Activated CD8-positive, alpha-beta T cell treated with anti-CD3 and anti-CD28 coated beads for 36 hours (primary cell): ENCODE measurements at regions of chr17 and their contacts with region 1.

Region 1: GRCh38 chr17:40536295-40537171 is 28.7 kb downstream of the CCR7 start:
- DNase-seq: peak; percentile 17
- ATAC-seq: no peak
- H3K4me3 Mint-ChIP-seq: no peak overlapping the region
- H3K27ac Mint-ChIP-seq: peak overlapping the region; percentile 50
- H3K4me1 Mint-ChIP-seq: peaks cover 93% of the 10 kb centered on the region
- H3K27me3 Mint-ChIP-seq: no peaks in the 10 kb centered on the region
- CTCF ChIP-seq: no peak

Region 2: GRCh38 chr17:40362696-40363110 is 173.8 kb before region 1 on chr17:
- CTCF ChIA-PET with region 1: interaction called, 168 read pairs
- POLR2A ChIA-PET with region 1: interaction called, 6 read pairs
- intact Hi-C with region 1: loop called (anchors 5 kb)
- DNase-seq: peak; percentile 93
- ATAC-seq: peak; percentile 90
- H3K4me3 Mint-ChIP-seq: peak overlapping the region; percentile 72
- H3K27ac Mint-ChIP-seq: no peak overlapping the region
- H3K4me1 Mint-ChIP-seq: peaks cover 6% of the 10 kb centered on the region
- H3K27me3 Mint-ChIP-seq: peaks cover 4% of the 10 kb centered on the region
- CTCF ChIP-seq: peak; percentile 88

Region 3: DNA sequence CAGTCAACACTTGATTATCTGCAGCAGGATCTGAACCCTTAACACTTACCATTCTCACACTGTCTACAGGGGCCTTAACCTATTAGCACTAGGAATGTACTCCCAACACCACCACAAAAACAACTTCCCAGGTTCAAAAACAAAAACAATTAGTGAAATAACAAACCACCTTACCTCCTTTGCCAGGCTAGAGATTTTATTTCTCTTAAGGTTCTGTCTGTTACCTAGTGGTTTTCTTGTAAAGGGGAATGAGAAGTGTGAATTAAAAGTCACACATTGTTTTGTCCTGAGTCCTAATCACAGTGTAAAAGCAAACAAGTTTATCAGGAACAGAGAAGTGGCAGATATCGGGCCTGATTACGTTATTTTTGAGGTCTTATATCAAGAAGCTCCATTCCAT is 101.4 kb after region 1 on chr17:
- CTCF ChIA-PET with region 1: no interaction called
- POLR2A ChIA-PET with region 1: no interaction called
- intact Hi-C with region 1: no loop called
- DNase-seq: no peak
- ATAC-seq: no peak
- H3K4me3 Mint-ChIP-seq: no peak overlapping the region
- H3K27ac Mint-ChIP-seq: peak overlapping the region; percentile 13
- H3K4me1 Mint-ChIP-seq: peaks cover 31% of the 10 kb centered on the region
- H3K27me3 Mint-ChIP-seq: no peaks in the 10 kb centered on the region
- CTCF ChIP-seq: no peak

Region 4: GRCh38 chr17:40895106-40895730 is 358.7 kb after region 1 on chr17:
- CTCF ChIA-PET with region 1: no interaction called
- POLR2A ChIA-PET with region 1: no interaction called
- intact Hi-C with region 1: no loop called
- DNase-seq: no peak
- ATAC-seq: no peak
- H3K4me3 Mint-ChIP-seq: no peak overlapping the region
- H3K27ac Mint-ChIP-seq: no peak overlapping the region
- H3K4me1 Mint-ChIP-seq: no peaks in the 10 kb centered on the region
- H3K27me3 Mint-ChIP-seq: peaks cover 29% of the 10 kb centered on the region
- CTCF ChIP-seq: no peak